Activated CD4-positive, alpha-beta memory T cell treated with anti-CD3 and anti-CD28 coated beads for 36 hours (primary cell): ENCODE measurements at regions of chr9 and their contacts with region 1.

Region 1: DNA sequence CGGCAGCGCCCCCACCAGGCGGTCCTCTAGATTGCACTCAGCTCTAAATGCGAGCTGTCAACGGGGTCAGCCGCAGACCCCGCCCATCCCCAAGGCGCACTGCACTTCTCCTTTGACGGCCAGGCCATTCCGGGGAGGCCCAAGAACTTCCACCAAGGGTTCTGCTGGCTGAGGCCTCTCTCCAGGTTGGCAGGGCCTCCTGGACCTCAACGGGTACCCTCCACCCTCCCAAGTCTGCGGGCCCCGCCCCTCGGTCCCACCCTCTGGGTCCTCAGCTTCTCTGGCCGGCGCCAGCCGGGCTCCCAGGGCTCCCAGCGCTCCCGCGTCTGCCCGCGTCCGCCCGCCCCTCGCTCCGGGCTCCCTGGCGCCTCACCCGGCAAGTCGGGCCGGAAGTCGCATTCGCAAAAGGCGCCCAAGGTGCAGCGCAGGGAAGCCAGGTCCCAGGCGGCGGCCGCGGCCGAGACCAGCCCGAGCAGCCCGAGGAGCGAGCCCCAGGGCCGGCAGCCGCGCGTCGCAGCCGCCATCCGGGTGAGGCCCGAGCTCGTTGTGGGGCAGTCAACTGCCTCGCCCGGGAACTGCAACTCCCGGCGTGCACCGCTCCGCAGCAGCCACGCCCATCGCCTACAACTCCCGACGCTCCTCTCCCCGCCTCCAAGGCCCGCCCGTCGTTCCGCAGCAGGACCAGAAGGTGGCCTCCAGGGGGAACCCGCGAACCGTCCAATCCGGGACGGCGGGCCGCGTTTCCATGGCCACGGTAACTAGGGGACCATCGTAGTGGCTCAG is at the start of gene TOR2A:
- DNase-seq: peak; percentile 99
- H3K4me3 Mint-ChIP-seq: peak within 1 kb of the TSS; percentile 74
- H3K27ac Mint-ChIP-seq: peak within 1 kb of the TSS; percentile 76
- H3K4me1 Mint-ChIP-seq: peaks cover 12% of the 10 kb centered on the region
- H3K27me3 Mint-ChIP-seq: no peaks in the 10 kb centered on the region
- total RNA-seq, gene TOR2A: 12.7 to 16.2 TPM

Region 2: GRCh38 chr9:127525401-127526187 is 209.3 kb before region 1 on chr9:
- CTCF ChIA-PET with region 1: interaction called, 25 read pairs
- POLR2A ChIA-PET with region 1: interaction called, 3 read pairs
- intact Hi-C with region 1: no loop called
- DNase-seq: peak; percentile 36
- H3K4me3 Mint-ChIP-seq: no peak overlapping the region
- H3K27ac Mint-ChIP-seq: no peak overlapping the region
- H3K4me1 Mint-ChIP-seq: no peaks in the 10 kb centered on the region
- H3K27me3 Mint-ChIP-seq: no peaks in the 10 kb centered on the region

Region 3: GRCh38 chr9:127608104-127608966 is 126.6 kb before region 1 on chr9:
- CTCF ChIA-PET with region 1: interaction called, 24 read pairs
- POLR2A ChIA-PET with region 1: interaction called, 3 read pairs
- intact Hi-C with region 1: loop called (anchors 1 kb)
- DNase-seq: peak; percentile 82
- H3K4me3 Mint-ChIP-seq: peak overlapping the region; percentile 73
- H3K27ac Mint-ChIP-seq: peak overlapping the region; percentile 9
- H3K4me1 Mint-ChIP-seq: peaks cover 20% of the 10 kb centered on the region
- H3K27me3 Mint-ChIP-seq: peaks cover 13% of the 10 kb centered on the region

Region 4: DNA sequence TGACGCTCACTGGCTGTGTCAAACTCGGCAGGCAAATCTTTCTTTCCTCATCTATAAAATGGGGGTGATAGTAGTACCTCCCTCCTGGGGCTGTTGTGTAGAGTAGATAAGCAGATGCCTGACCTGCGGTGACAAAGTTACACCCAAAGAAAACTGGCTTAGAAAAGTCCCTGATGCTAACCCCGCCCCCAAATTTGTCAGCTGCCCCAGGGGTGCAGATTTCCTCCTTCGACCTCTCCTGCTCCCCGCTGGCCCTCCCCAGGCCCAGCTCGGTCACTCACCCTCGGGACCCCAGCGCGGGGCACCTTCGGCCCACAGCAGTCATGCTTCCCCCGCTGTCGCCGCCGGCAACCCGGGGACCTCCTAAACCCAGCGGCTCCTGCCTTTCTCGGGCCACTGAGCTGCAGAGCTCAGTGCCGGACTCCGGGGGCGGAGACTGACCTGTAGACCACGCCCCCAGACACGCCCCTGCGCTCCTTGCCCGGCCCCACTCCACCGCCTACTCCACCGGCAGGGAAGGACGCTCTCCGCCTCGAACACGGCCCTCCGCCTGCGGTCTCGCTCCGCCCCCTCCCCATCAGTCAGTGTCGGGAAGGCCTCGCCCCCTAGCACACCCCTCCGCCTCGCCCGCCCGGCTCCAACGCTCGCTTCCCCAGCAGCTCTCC is 36.1 kb after region 1 on chr9:
- CTCF ChIA-PET with region 1: interaction called, 43 read pairs
- POLR2A ChIA-PET with region 1: interaction called, 7 read pairs
- intact Hi-C with region 1: loop called (anchors 1 kb)
- DNase-seq: peak; percentile 99
- H3K4me3 Mint-ChIP-seq: peak overlapping the region; percentile 89
- H3K27ac Mint-ChIP-seq: peak overlapping the region; percentile 85
- H3K4me1 Mint-ChIP-seq: peaks cover 56% of the 10 kb centered on the region
- H3K27me3 Mint-ChIP-seq: no peaks in the 10 kb centered on the region

Region 5: DNA sequence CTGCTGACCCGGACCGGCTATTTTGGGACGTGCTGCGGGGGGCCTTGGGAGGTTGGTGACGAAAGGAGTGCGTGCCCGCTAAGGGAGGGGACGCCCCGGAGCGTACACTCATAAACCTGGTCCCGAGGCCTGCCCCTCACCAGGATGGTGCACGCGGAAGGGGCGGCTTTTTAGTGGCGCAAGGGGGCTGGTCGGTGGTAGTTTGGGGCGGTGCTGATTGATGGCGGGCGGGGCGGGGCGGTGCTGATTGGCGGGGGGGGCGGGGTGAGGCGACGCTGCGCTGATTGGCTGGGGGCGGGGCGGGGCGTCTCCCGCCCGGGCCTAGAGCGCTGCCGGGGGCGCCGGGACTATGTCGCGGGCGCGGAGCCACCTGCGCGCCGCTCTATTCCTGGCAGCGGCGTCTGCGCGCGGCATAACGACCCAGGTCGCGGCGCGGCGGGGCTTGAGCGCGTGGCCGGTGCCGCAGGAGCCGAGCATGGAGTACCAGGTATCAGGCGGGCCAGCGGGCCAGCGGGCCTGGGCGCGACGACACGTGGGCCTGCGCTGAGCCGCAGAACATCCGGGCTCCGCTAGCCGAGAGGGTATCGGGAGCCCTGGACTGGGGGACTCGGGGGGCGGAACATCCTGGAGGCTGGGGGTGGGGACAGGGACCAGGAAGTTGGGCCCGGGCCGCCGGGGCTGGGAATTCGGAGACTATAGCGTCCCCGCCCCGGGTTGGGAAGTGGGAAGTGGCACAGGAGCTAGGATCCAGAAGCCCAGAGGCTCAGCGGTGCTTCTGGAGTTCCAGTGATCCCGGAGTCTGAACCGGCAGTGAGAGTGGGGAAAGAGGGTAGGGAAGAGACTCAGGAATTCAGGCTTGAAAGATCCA is 67.9 kb after region 1 on chr9 and contains the start of gene FPGS:
- CTCF ChIA-PET with region 1: interaction called, 12 read pairs
- POLR2A ChIA-PET with region 1: interaction called, 3 read pairs
- intact Hi-C with region 1: no loop called
- DNase-seq: peak; percentile 91
- H3K4me3 Mint-ChIP-seq: peak within 1 kb of the TSS; percentile 88
- H3K27ac Mint-ChIP-seq: peak within 1 kb of the TSS; percentile 88
- H3K4me1 Mint-ChIP-seq: peaks cover 24% of the 10 kb centered on the region
- H3K27me3 Mint-ChIP-seq: no peaks in the 10 kb centered on the region
- total RNA-seq, gene FPGS: 80.0 to 83.9 TPM